ENCODE measurements at regions of chr9 and their contacts with region 1.

Region 1: DNA sequence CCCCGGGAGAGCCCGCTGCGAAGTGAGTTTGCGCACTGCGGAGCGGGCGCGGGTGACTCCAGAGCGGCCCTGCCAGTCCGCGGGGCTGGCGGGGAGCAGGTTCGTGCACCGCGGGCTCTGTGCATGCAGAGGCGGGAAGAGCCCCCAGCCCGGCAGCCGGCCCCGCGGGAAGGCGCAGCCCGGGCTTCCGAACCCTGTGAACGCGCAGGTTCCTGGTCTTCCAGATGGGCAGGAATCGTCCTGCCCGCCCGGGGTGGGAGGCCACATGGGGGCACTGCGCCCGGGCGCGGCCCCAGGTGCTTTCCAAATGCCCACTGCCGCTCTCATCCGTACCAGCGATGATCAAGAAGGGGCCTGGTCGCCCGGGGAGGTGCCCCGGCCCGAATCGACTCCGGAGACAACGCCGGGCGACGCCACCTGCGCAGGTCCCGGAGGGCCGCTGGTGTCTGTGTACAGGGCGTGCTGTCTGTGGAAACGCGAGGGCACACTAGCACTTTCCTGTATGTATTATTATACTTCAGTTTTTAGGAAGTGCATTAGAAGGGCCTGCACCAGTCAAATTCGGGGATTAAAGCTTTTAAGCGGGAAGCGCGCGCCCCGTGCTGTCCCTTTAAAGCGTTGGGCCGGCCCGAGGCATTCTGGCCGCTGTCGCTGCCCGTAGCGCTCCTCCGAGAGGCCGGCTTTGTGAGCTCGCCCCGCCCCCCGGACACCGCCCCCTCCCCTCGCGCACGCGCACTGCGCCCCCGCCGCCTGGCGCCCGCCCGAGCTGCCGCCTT is at the start of gene WDR5:
- DNase-seq: peak; percentile 92 to 96 (median 94)
- H3K4me3 ChIP-seq: peak within 1 kb of the TSS; percentile 55
- H3K27ac ChIP-seq: peak within 1 kb of the TSS; percentile 80 to 81
- H3K4me1 ChIP-seq: peaks cover 17% of the 10 kb centered on the region
- H3K27me3 ChIP-seq: no peaks in the 10 kb centered on the region
- CTCF ChIP-seq: peak in 2 of 3 donors; percentile 6 to 12
- EP300 ChIP-seq: no peak
- POLR2A ChIP-seq: peak; percentile 53
- total RNA-seq, gene WDR5: 8.7 to 33.5 (median 28.6) TPM

Region 2: GRCh38 chr9:134024828-134025605 is 110.5 kb before region 1 on chr9 and contains the start of gene BRD3OS:
- intact Hi-C with region 1: loop called in 1 of 4 experiments (anchors 10 kb)
- DNase-seq: peak; percentile 94 to 98 (median 96)
- H3K4me3 ChIP-seq: peak within 1 kb of the TSS; percentile 96
- H3K27ac ChIP-seq: peak within 1 kb of the TSS; percentile 62 to 79
- H3K4me1 ChIP-seq: peaks cover 5% of the 10 kb centered on the region
- H3K27me3 ChIP-seq: no peaks in the 10 kb centered on the region
- CTCF ChIP-seq: no peak
- EP300 ChIP-seq: no peak
- POLR2A ChIP-seq: peak; percentile 21
- total RNA-seq, gene BRD3OS: 14.5 to 26.3 (median 21.1) TPM

Region 3: DNA sequence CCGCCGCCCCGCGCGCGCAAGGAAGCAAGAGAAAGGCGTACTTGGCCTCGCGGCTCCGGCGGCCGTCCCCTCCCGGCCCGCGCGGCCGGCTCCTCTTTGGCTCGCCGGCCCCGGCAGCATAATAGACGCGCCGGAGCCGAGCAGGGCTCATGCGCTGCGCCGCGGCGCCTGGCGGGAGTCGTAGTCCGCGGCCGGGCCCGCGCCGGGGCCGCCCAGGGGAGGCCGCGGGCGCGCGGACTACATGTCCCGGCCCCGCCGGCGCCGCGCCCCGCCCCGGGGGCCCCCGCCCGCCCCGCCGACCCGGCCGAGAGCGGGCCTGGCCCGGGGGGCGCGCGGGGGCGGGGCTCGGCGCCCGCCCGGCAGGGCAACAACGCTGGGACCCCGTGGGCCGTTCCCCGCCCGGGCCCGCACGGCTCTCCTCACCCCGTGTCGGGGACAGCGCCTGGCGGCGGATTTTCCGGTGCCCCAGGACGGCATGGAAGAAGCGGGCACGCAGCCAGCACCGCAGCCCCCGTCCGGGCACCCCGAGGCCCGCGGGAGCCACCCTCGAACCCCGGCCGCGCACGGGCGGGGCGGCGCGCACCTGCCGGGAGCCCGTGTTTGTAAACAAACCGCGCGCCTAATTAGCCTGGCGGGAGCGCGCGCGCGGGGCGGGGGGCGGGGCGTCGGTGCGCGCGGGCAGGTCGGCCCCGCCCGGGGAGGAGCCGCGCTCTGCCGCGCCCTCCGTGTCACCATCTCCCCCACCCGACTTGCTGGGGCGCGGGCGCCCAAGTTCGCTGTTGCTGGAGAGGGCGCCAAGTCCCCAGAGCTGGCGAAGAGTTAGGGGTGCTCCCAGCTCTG is 67.4 kb before region 1 on chr9 and contains the start of gene BRD3:
- intact Hi-C with region 1: loop called in 3 of 4 experiments (anchors 5 kb)
- DNase-seq: peak; percentile 76 to 90 (median 83)
- H3K4me3 ChIP-seq: peak within 1 kb of the TSS; percentile 84
- H3K27ac ChIP-seq: peak within 1 kb of the TSS; percentile 76 to 91
- H3K4me1 ChIP-seq: peaks cover 15% of the 10 kb centered on the region
- H3K27me3 ChIP-seq: no peaks in the 10 kb centered on the region
- CTCF ChIP-seq: peak in 1 of 3 donors; percentile 15
- EP300 ChIP-seq: no peak
- POLR2A ChIP-seq: peak; percentile 31
- total RNA-seq, gene BRD3: 15.9 to 52.1 (median 39.2) TPM

Region 4: DNA sequence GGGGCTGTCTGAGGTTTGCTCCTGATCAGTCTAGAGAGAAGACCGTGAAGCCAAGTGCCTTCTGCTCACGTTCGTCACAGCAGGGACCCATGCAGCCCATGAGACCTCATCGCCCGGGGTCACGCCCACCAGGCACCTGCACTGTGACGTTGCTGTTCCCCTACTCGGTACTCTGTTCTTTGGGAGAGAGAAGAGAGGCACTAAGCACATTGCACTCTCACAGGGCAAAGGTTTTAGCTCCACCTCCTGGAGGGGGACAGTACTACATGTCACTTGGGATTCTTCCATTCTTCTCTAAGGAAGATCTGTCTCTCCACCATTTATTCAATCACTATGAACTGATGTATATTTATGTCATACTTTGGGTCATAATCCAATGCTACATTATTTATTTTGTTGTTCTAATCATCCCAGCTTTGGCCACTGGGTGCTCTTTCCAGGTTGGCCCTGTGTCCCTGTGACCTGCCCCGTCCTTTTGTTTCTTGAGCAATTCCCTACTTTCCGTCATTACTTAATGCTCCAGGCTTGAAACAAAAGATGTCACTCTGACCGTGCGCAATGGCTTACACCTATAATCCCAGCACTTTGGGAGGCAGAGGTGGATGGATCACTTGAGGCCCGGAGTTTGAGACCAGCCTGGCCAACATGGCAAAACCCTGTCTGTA is 36.3 kb before region 1 on chr9:
- intact Hi-C with region 1: no loop called
- DNase-seq: no peak
- H3K4me3 ChIP-seq: no peak overlapping the region
- H3K27ac ChIP-seq: no peak overlapping the region
- H3K4me1 ChIP-seq: no peaks in the 10 kb centered on the region
- H3K27me3 ChIP-seq: no peaks in the 10 kb centered on the region
- CTCF ChIP-seq: no peak
- EP300 ChIP-seq: no peak
- POLR2A ChIP-seq: no peak

Measured in ovary (tissue), 10 donors.